Head of caudate nucleus (tissue), 42 donors: ENCODE measurements at regions of chr5 and their contacts with region 1.

Region 1: DNA sequence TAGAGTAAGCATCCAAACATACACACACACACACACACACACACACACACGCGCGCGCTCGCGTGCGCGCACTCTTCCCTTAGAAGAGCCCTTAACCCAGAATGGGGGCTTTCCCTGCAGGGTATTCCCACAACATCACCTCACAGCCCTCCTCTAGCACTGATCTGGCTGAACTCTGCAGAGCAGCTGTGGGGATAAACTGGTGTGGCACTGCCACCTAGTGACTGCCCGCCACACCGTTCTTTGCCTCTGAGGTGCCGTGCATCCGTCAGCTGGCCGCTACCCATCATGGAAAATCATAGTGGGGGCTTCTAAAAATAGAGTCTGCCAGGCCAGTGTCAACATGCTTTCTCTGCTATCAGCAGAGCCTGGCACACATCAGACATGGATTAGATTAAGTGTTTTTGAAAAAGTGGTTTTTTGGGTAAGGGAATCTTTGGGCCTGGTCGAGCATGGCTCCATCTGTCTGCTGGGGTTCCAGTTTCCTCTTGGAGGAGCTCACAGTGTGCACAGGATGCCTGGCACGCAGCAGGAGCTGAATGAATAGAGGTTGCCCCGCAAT is 88.1 kb downstream of the KCNN2 start:
- DNase-seq: peak; percentile 65 to 93 (median 82)

Region 2: DNA sequence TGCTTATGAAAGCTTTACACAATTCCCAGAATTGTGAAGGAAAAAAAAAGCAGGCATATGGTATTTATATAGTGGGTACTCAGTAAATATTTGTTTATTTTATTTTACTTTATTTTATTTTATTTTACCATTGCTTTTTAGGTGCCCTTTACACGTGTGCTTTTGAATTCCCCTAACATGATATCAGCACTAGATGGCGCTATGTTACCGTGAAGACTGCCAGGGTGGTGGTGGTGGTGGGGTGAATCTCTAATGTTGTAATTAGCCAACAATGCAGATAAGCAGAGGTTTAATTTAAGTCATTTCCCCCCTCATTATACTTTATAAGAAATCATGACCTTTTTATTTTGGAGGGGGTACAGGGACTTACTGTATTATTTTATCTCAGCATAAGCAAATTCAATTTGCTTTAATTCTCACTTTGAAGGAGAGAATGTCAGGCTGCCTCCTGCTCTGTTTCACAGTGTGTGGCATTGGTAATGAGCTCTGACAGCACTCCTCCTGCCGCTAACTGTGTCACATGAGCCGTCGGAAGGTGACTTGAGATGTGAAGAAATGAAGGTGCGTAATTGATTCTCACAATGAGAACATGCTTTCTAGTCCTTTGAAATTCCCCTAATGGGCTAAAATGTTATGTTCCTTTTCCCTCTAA is 770.9 kb before region 1 on chr5:
- intact Hi-C with region 1: loop called (anchors 5 kb)
- DNase-seq: peak in 37 of 42 donors; percentile 7 to 77 (median 50)

Region 3: GRCh38 chr5:114361724-114362196 is 88.2 kb before region 1 on chr5 and contains the start of gene KCNN2:
- intact Hi-C with region 1: loop called (anchors 10 kb)
- DNase-seq: peak; percentile 75 to 97 (median 91)